ENCODE measurements at regions of chr17 and their contacts with region 1.

Region 1: GRCh38 chr17:56699186-56699895 is 105.8 kb downstream of the NOG start:
- DNase-seq: peak; percentile 99
- ATAC-seq: peak; percentile 97
- H3K4me3 ChIP-seq: no peak overlapping the region
- H3K27ac ChIP-seq: peak overlapping the region; percentile 41
- H3K4me1 ChIP-seq: peaks cover 10% of the 10 kb centered on the region
- H3K27me3 ChIP-seq: no peaks in the 10 kb centered on the region
- CTCF ChIP-seq: no peak
- POLR2A ChIP-seq: no peak
- RAD21 ChIP-seq: no peak

Region 2: GRCh38 chr17:55731586-55732250 is 967.6 kb before region 1 on chr17:
- CTCF ChIA-PET with region 1: no interaction called
- POLR2A ChIA-PET with region 1: no interaction called
- dilution Hi-C with region 1: no loop called
- in situ Hi-C with region 1: no loop called
- intact Hi-C with region 1: loop called (anchors 5 kb)
- DNase-seq: peak; percentile 36
- ATAC-seq: peak; percentile 64
- H3K4me3 ChIP-seq: no peak overlapping the region
- H3K27ac ChIP-seq: no peak overlapping the region
- H3K4me1 ChIP-seq: peaks cover 25% of the 10 kb centered on the region
- H3K27me3 ChIP-seq: no peaks in the 10 kb centered on the region
- CTCF ChIP-seq: no peak
- POLR2A ChIP-seq: no peak
- RAD21 ChIP-seq: no peak

Region 3: DNA sequence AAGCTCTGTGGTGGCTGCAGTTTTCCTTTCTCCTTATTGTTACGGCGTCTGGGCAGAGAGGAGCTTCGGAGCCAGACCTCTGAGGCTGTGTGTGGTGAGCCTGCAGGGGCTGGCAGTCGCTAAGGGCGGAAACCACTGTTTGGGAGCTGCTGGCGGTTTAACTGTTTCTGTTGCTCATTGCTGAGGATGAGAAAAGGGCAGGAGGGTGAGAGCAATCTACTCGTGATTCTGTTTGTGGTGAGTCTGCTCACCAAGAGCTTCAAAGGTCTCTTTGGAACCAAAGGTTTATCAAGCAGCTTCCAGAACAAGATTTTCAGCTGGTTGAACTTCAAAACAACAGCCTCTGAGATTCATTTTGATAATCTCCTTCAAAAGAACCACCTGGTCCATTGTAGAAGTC is 402.2 kb before region 1 on chr17:
- CTCF ChIA-PET with region 1: no interaction called
- POLR2A ChIA-PET with region 1: no interaction called
- dilution Hi-C with region 1: no loop called
- in situ Hi-C with region 1: no loop called
- intact Hi-C with region 1: loop called (anchors 10 kb)
- DNase-seq: peak; percentile 62
- ATAC-seq: peak; percentile 79
- H3K4me3 ChIP-seq: no peak overlapping the region
- H3K27ac ChIP-seq: peak overlapping the region; percentile 64; the same call in 1 of the 2 replicates
- H3K4me1 ChIP-seq: peaks cover 8% of the 10 kb centered on the region; the same call in 1 of the 2 replicates
- H3K27me3 ChIP-seq: no peaks in the 10 kb centered on the region
- CTCF ChIP-seq: no peak
- POLR2A ChIP-seq: no peak
- RAD21 ChIP-seq: no peak